GM12878 (cell line): ENCODE measurements at regions of chr1 and their contacts with region 1.

Region 1: GRCh38 chr1:111030590-111030989 is 66.9 kb upstream of the LRIF1 start:
- DNase-seq: peak; percentile 45
- ATAC-seq: peak; percentile 95
- H3K4me3 ChIP-seq: no peak overlapping the region
- H3K27ac ChIP-seq: no peak overlapping the region
- H3K4me1 ChIP-seq: no peaks in the 10 kb centered on the region
- H3K27me3 ChIP-seq: no peaks in the 10 kb centered on the region
- CTCF ChIP-seq: peak; percentile 80 to 90 (median 90)
- EP300 ChIP-seq: no peak
- POLR2A ChIP-seq: no peak
- RAD21 ChIP-seq: peak; percentile 69

Region 2: DNA sequence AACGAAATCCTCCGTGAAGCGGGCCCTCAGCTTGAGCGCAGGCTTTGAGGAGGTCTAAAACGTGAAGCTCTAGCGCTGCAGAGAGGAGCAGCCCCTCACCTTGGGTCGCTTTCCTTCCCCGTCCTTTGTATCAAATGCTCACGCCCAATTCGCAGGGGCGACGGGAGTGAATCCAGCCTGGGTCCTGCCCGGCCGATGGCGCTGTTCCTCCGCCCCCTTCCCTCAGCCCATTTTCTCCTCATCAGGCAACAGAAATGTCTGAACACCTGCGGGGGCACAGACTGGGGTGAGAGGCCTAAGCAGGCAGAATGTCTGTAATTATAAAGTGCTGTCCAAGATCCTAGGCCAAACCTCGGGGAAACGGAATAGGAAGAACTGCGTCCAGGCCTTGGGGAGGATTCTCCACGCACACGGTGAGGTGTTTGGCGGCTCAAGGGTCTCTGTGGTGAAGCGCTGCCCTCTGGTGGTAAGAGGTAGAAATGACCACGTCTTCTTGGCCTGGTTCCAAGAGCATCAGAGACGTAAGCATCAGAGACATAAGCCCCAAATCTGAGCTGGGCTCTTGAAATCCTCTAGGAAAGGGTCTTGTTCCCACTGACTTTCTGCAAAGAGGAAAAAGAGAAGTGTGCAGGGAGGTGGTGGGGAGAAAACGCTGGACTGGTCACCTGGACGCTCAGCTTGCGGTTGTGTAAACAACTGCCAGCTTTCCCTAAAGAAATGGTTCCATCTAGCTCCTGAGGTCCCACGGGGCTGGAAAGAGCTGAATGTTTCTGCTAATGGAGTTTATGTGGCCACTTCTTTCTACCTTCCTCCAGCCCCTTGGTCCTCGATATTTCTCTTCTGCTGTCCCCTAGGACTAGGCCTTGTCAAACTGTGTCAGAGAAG is 249.7 kb before region 1 on chr1:
- CTCF ChIA-PET with region 1: interaction called, 15 read pairs
- POLR2A ChIA-PET with region 1: no interaction called
- RAD21 ChIA-PET with region 1: interaction called, 4 read pairs
- SMC1A ChIA-PET with region 1: interaction called, 3 read pairs
- in situ Hi-C with region 1: no loop called
- intact Hi-C with region 1: no loop called
- DNase-seq: no peak
- ATAC-seq: peak; percentile 81
- H3K4me3 ChIP-seq: no peak overlapping the region
- H3K27ac ChIP-seq: no peak overlapping the region
- H3K4me1 ChIP-seq: peaks cover 5% of the 10 kb centered on the region
- H3K27me3 ChIP-seq: no peaks in the 10 kb centered on the region
- CTCF ChIP-seq: peak; percentile 74 to 87 (median 83)
- EP300 ChIP-seq: no peak
- POLR2A ChIP-seq: no peak
- RAD21 ChIP-seq: peak; percentile 90

Region 3: DNA sequence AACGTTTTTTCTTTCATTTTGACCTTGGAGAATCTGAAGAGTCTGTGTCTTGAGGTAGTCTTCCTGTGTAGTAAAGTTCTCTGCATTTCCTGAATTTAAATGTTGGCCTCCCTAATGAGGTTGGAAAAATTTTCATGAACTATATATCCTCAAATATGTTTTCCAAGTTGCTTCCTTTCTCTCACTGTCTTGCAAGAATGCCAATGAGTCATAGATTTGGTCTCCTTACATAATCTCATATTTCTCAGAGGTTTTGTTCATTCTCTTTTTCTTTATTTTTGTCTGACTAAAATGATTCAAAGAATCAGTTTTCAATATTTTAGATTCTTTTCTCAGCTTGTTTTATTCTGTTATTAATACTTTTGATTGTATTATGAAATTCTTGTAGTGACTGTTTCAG is 21.7 kb after region 1 on chr1:
- CTCF ChIA-PET with region 1: no interaction called
- POLR2A ChIA-PET with region 1: no interaction called
- RAD21 ChIA-PET with region 1: no interaction called
- SMC1A ChIA-PET with region 1: no interaction called
- in situ Hi-C with region 1: no loop called
- intact Hi-C with region 1: no loop called
- DNase-seq: no peak
- ATAC-seq: no peak
- H3K4me3 ChIP-seq: no peak overlapping the region
- H3K27ac ChIP-seq: no peak overlapping the region
- H3K4me1 ChIP-seq: no peaks in the 10 kb centered on the region
- H3K27me3 ChIP-seq: no peaks in the 10 kb centered on the region
- CTCF ChIP-seq: no peak
- EP300 ChIP-seq: no peak
- POLR2A ChIP-seq: no peak
- RAD21 ChIP-seq: no peak

Region 4: GRCh38 chr1:111127923-111128643 is 97.5 kb after region 1 on chr1:
- CTCF ChIA-PET with region 1: interaction called, 10 read pairs
- POLR2A ChIA-PET with region 1: no interaction called
- RAD21 ChIA-PET with region 1: interaction called, 7 read pairs
- SMC1A ChIA-PET with region 1: interaction called, 5 read pairs
- in situ Hi-C with region 1: no loop called
- intact Hi-C with region 1: loop called (anchors 5 kb)
- DNase-seq: peak; percentile 81
- ATAC-seq: peak; percentile 90
- H3K4me3 ChIP-seq: 0 out of 2 replicates have a peak overlapping the region, but pooled peaks have one; percentile 45
- H3K27ac ChIP-seq: peak overlapping the region; percentile 94
- H3K4me1 ChIP-seq: peaks cover 43% of the 10 kb centered on the region
- H3K27me3 ChIP-seq: no peaks in the 10 kb centered on the region
- CTCF ChIP-seq: no peak
- EP300 ChIP-seq: peak; percentile 26 to 54; a peak in 1 of 4 replicates
- POLR2A ChIP-seq: no peak
- RAD21 ChIP-seq: no peak

Region 5: GRCh38 chr1:111154021-111154999 is 123.7 kb after region 1 on chr1:
- CTCF ChIA-PET with region 1: interaction called, 15 read pairs
- POLR2A ChIA-PET with region 1: no interaction called
- RAD21 ChIA-PET with region 1: no interaction called
- SMC1A ChIA-PET with region 1: interaction called, 5 read pairs
- in situ Hi-C with region 1: no loop called
- intact Hi-C with region 1: no loop called
- DNase-seq: no peak
- ATAC-seq: peak; percentile 24
- H3K4me3 ChIP-seq: peak overlapping the region; percentile 4; the same call in 1 of the 2 replicates
- H3K27ac ChIP-seq: no peak overlapping the region
- H3K4me1 ChIP-seq: no peaks in the 10 kb centered on the region; the same call in none of the 2 replicates
- H3K27me3 ChIP-seq: no peaks in the 10 kb centered on the region
- CTCF ChIP-seq: no peak
- EP300 ChIP-seq: no peak
- POLR2A ChIP-seq: no peak
- RAD21 ChIP-seq: no peak

Region 6: DNA sequence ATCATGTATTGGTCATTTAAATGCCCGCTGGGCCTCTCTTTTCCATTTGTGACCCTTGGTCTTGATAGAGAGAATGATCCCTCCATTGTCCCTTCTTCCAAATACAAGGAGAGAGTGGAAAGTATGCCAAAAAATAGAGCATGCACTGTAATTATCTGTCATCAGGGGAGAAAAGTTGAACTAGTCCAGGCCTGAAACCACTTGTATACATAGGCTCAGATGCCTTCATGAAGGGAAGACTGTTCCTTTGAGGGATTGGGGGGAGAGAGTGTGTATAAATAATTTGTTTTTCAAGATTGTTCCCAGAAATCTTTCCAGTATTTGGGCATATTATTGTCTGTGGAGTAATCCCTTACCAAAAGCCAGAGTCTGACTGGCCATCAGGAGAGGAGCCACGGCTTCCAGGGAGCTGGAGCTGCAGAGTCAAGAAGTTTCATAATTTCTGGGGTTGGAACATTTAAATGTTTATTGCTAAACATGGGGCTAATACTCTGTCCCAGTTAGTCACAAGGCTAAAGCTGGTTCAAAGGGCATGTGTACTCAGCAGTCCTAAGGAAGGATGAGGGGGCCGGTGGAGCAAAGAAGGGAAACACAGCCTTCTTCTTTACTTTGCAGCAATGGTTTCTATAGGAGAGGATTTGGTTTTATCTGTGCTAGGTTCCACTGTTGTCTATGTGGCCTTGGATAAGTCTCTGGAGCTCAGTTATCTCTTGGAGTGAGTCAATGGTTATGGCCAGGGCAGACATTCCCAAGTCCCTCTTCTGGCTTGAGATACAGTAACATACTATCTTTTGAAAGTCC is 160.3 kb after region 1 on chr1:
- CTCF ChIA-PET with region 1: interaction called, 18 read pairs
- POLR2A ChIA-PET with region 1: no interaction called
- RAD21 ChIA-PET with region 1: interaction called, 8 read pairs
- SMC1A ChIA-PET with region 1: interaction called, 11 read pairs
- in situ Hi-C with region 1: no loop called
- intact Hi-C with region 1: loop called (anchors 5 kb)
- DNase-seq: no peak
- ATAC-seq: no peak
- H3K4me3 ChIP-seq: no peak overlapping the region
- H3K27ac ChIP-seq: no peak overlapping the region
- H3K4me1 ChIP-seq: peaks cover 34% of the 10 kb centered on the region
- H3K27me3 ChIP-seq: no peaks in the 10 kb centered on the region
- CTCF ChIP-seq: no peak
- EP300 ChIP-seq: no peak
- POLR2A ChIP-seq: no peak
- RAD21 ChIP-seq: no peak

Region 7: GRCh38 chr1:111334169-111334568 is 303.6 kb after region 1 on chr1:
- CTCF ChIA-PET with region 1: interaction called, 31 read pairs
- POLR2A ChIA-PET with region 1: no interaction called
- RAD21 ChIA-PET with region 1: interaction called, 28 read pairs
- SMC1A ChIA-PET with region 1: interaction called, 28 read pairs
- in situ Hi-C with region 1: no loop called
- intact Hi-C with region 1: loop called (anchors 5 kb)
- DNase-seq: peak; percentile 33
- ATAC-seq: peak; percentile 85
- H3K4me3 ChIP-seq: no peak overlapping the region
- H3K27ac ChIP-seq: no peak overlapping the region
- H3K4me1 ChIP-seq: peaks cover 17% of the 10 kb centered on the region
- H3K27me3 ChIP-seq: no peaks in the 10 kb centered on the region
- CTCF ChIP-seq: peak; percentile 61 to 75 (median 73); a peak in 5 of 6 replicates
- EP300 ChIP-seq: no peak
- POLR2A ChIP-seq: no peak
- RAD21 ChIP-seq: peak; percentile 95